ENCODE measurements at regions of chr17 and their contacts with region 1.

Region 1: GRCh38 chr17:39980351-39981206 is at the start of gene PSMD3:
- DNase-seq: peak; percentile 100
- H3K4me3 ChIP-seq: peak within 1 kb of the TSS; percentile 84 to 100 (median 87)
- H3K27ac ChIP-seq: peak within 1 kb of the TSS; percentile 87
- H3K4me1 ChIP-seq: peaks cover 21% of the 10 kb centered on the region
- H3K27me3 ChIP-seq: peaks cover 6 to 16% of the 10 kb centered on the region in 2 experiments
- CTCF ChIP-seq: peak; percentile 73 to 77
- POLR2A ChIP-seq: peak; percentile 75
- total RNA-seq, gene PSMD3: 136 and 142 TPM in 2 replicates

Region 2: GRCh38 chr17:39730095-39730921 is 250.3 kb before region 1 on chr17 and contains the start of gene MIEN1:
- CTCF ChIA-PET with region 1: interaction called, 6 read pairs
- POLR2A ChIA-PET with region 1: no interaction called
- dilution Hi-C with region 1: no loop called
- intact Hi-C with region 1: loop called (anchors 1 kb)
- DNase-seq: peak; percentile 86
- H3K4me3 ChIP-seq: peak within 1 kb of the TSS; percentile 40 to 87 (median 59)
- H3K27ac ChIP-seq: peak within 1 kb of the TSS; percentile 68
- H3K4me1 ChIP-seq: peaks cover 13% of the 10 kb centered on the region
- H3K27me3 ChIP-seq: no peaks in the 10 kb centered on the region
- CTCF ChIP-seq: peak; percentile 83 to 95
- POLR2A ChIP-seq: peak; percentile 82
- total RNA-seq, gene MIEN1: 42.4 and 51.1 TPM in 2 replicates

Region 3: DNA sequence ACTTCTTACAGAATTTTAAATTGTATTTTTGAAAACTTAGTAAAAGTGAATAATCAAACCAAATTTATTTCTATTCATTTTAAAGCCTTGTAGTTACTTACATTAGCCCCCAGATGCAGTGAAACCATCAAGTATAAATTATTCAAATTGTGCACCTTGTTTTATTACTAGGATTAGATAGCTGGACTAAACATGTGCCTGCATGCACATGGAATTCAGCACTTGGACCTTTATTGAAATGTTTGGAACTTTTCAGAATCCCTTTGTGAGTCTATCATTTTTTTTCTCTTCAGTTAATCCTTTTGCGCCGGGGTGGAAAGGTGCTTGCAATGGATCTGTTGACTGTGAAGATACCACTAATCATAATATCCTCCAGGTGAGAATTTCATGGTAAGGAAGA is 107.8 kb before region 1 on chr17:
- CTCF ChIA-PET with region 1: interaction called, 24 read pairs
- POLR2A ChIA-PET with region 1: no interaction called
- dilution Hi-C with region 1: no loop called
- intact Hi-C with region 1: loop called (anchors 1 kb)
- DNase-seq: peak; percentile 19
- H3K4me3 ChIP-seq: no peak overlapping the region
- H3K27ac ChIP-seq: no peak overlapping the region
- H3K4me1 ChIP-seq: no peaks in the 10 kb centered on the region
- H3K27me3 ChIP-seq: peaks cover 16 to 31% of the 10 kb centered on the region in 2 experiments
- CTCF ChIP-seq: no peak
- POLR2A ChIP-seq: no peak

Region 4: GRCh38 chr17:39952680-39953470 is 27.7 kb before region 1 on chr17:
- CTCF ChIA-PET with region 1: interaction called, 108 read pairs
- POLR2A ChIA-PET with region 1: interaction called, 4 read pairs
- dilution Hi-C with region 1: no loop called
- intact Hi-C with region 1: loop called (anchors 1 kb)
- DNase-seq: peak; percentile 89
- H3K4me3 ChIP-seq: peak overlapping the region in 2 of 3 experiments; percentile 23 to 35
- H3K27ac ChIP-seq: no peak overlapping the region
- H3K4me1 ChIP-seq: peaks cover 3% of the 10 kb centered on the region
- H3K27me3 ChIP-seq: peaks cover 0 to 3% of the 10 kb centered on the region in 2 experiments
- CTCF ChIP-seq: no peak
- POLR2A ChIP-seq: no peak

Region 5: GRCh38 chr17:40026816-40027613 is 46.4 kb after region 1 on chr17:
- CTCF ChIA-PET with region 1: interaction called, 3 read pairs
- POLR2A ChIA-PET with region 1: no interaction called
- dilution Hi-C with region 1: no loop called
- intact Hi-C with region 1: loop called (anchors 2 kb)
- DNase-seq: peak; percentile 74
- H3K4me3 ChIP-seq: no peak overlapping the region
- H3K27ac ChIP-seq: peak overlapping the region; percentile 99
- H3K4me1 ChIP-seq: peaks cover 48% of the 10 kb centered on the region
- H3K27me3 ChIP-seq: no peaks in the 10 kb centered on the region
- CTCF ChIP-seq: peak; percentile 81 to 93
- POLR2A ChIP-seq: no peak